Breast epithelium (tissue), 4 donors: ENCODE measurements at regions of chr7 and their contacts with region 1.

Region 1: DNA sequence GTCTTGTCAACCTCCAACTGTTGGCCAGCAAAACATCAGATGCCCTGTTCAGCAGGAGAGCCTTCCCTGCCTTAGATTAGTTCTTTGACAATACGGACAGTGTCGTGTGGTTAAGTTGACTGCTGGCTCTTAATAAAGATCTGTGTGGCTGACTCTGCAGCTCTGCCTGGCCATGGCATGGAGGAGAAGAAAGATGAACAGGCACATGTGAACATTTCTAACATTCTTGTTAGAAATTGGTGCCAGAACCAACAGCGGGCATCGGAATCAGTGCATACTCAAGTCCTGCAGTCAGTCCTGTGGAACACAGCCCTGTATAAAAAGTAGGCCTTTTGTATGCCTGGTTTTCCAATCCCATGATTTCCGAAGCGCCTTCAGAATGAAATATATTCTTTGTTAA is 455.6 kb downstream of the POM121L12 start:
- DNase-seq: no peak
- H3K4me3 ChIP-seq: no peak overlapping the region
- H3K27ac ChIP-seq: no peak overlapping the region
- H3K4me1 ChIP-seq: no peaks in the 10 kb centered on the region
- H3K27me3 ChIP-seq: no peaks in the 10 kb centered on the region
- CTCF ChIP-seq: no peak
- POLR2A ChIP-seq: no peak

Region 2: GRCh38 chr7:53504914-53505313 is 13.9 kb after region 1 on chr7:
- intact Hi-C with region 1: loop called (anchors 2 kb)
- DNase-seq: no peak
- H3K4me3 ChIP-seq: no peak overlapping the region
- H3K27ac ChIP-seq: no peak overlapping the region
- H3K4me1 ChIP-seq: no peaks in the 10 kb centered on the region
- H3K27me3 ChIP-seq: no peaks in the 10 kb centered on the region
- CTCF ChIP-seq: no peak
- POLR2A ChIP-seq: no peak

Region 3: DNA sequence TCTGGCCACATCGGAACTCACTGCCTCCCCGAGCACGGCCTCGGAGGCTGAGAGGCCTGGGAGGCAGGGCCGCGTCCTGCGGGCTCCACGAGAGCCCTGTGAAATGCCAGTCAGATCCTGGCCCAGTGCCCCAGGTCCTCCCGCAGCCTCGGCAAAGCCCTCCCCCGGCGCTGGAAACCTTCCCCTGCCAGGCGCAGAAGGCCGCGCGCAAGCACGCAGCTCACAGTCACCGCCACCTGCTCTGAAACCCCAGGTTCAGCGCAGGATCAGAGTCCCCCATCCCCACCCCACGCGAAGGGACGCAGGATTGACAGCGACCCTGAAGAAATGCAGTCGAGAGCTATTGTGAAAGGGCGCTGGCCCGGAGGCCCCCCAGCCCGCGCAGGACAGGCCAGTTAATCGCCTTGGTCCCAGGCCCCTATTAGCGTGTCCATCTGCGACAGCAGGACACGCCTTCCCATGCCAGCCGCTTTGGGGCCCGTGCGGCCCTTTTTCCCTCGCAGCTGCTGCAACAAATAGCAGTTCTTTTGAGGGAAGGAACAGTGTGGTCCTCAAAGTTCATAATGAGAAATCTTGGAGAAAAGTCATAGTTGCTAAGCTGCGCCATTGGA is 1514.3 kb after region 1 on chr7:
- intact Hi-C with region 1: no loop called
- DNase-seq: no peak
- H3K4me3 ChIP-seq: no peak overlapping the region
- H3K27ac ChIP-seq: no peak overlapping the region
- H3K4me1 ChIP-seq: no peaks in the 10 kb centered on the region
- H3K27me3 ChIP-seq: no peaks in the 10 kb centered on the region
- CTCF ChIP-seq: no peak
- POLR2A ChIP-seq: no peak